ENCODE measurements at regions of chr2 and their contacts with region 1.

Region 1: GRCh38 chr2:203891474-203891873 is 23.9 kb downstream of the CTLA4 start:
- DNase-seq: peak; percentile 42
- H3K4me3 Mint-ChIP-seq: no peak overlapping the region
- H3K27ac Mint-ChIP-seq: no peak overlapping the region
- H3K4me1 Mint-ChIP-seq: peaks cover 56% of the 10 kb centered on the region
- H3K27me3 Mint-ChIP-seq: no peaks in the 10 kb centered on the region

Region 2: DNA sequence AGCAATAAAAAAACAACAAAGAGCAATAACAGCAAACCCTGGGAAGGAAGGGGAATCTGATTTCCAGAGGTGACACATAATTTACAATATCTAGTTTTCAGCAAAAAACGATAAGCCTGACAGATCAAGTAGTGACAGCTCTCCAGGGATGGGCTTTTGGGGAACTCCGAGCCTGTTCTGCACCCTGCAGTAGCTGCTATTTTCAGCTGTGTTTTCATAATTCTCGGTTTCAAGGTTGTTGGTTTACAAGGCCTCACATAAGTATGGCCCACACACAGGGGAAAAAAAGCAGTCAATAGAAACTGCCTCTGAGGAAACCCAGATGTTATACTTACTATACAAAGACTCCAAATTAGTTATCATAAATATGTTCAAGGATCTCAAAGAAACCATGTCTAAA is 91.6 kb before region 1 on chr2:
- CTCF ChIA-PET with region 1: no interaction called
- POLR2A ChIA-PET with region 1: no interaction called
- DNase-seq: no peak
- H3K4me3 Mint-ChIP-seq: no peak overlapping the region
- H3K27ac Mint-ChIP-seq: no peak overlapping the region
- H3K4me1 Mint-ChIP-seq: peaks cover 50% of the 10 kb centered on the region
- H3K27me3 Mint-ChIP-seq: no peaks in the 10 kb centered on the region

Region 3: DNA sequence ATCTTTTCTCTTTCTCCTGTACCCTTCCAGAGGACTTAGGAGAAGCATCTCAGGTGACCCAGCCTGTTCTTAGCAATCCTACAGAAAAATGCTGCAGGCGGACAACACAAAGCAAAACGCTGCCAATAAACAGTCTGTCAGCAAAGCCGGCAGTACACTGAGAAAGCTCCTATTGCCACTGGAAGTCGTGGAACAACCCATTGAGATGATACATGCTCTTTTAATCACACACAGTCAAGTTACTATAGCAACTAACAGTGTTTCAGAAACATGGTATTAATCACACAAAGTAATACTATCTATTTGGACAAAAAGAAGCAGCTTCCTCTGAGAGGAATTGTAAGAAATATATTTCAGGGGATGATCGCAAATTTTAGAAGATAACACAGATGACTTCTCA is 13.4 kb before region 1 on chr2:
- CTCF ChIA-PET with region 1: interaction called, 20 read pairs
- POLR2A ChIA-PET with region 1: no interaction called
- DNase-seq: no peak
- H3K4me3 Mint-ChIP-seq: no peak overlapping the region
- H3K27ac Mint-ChIP-seq: no peak overlapping the region
- H3K4me1 Mint-ChIP-seq: peaks cover 41% of the 10 kb centered on the region
- H3K27me3 Mint-ChIP-seq: no peaks in the 10 kb centered on the region